Left lung (tissue), 14 donors: ENCODE measurements at regions of chr6 and their contacts with region 1.

Region 1: DNA sequence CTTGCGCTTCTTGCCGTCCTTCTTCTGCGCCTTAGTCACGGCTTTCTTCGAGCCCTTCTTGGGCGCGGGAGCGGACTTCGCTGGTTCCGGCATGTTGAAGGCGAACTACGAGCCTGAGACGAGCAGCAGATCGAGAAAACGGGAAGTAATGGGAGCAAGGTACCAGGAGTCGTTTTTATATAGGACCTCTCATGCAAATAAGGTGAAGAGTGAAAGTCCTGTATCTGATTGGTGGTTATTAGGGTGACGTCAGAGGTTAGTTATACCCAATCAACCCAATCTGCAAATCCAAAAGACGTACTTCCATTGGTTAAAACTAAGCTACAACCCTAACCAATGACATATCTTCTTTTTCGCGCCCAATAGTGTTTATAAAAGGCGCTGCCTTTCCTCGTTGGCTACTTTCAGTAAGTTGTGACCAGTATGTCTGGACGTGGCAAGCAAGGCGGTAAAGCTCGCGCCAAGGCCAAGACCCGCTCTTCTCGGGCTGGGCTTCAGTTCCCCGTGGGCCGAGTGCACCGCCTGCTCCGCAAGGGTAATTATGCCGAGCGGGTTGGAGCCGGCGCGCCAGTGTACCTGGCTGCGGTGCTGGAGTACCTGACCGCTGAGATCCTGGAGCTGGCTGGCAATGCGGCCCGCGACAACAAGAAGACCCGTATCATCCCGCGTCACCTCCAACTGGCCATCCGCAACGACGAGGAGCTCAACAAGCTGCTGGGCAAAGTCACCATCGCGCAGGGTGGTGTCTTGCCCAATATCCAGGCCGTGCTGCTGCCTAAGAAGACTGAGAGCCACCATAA is 100.6 kb upstream of the PRSS16 start:
- DNase-seq: peak; percentile 86 to 98 (median 92)
- ATAC-seq: peak; percentile 93
- H3K4me3 ChIP-seq: peak overlapping the region; percentile 56 to 58
- H3K27ac ChIP-seq: peak overlapping the region; percentile 93 to 98
- H3K4me1 ChIP-seq: peaks cover 9 to 27% of the 10 kb centered on the region in 2 donors
- H3K27me3 ChIP-seq: no peaks in the 10 kb centered on the region
- CTCF ChIP-seq: no peak

Region 2: GRCh38 chr6:27893059-27893835 is 746.3 kb after region 1 on chr6:
- intact Hi-C with region 1: loop called in 1 of 2 experiments (anchors 10 kb)
- DNase-seq: peak; percentile 91 to 96 (median 93)
- ATAC-seq: peak; percentile 72
- H3K4me3 ChIP-seq: peak overlapping the region; percentile 59 to 64
- H3K27ac ChIP-seq: peak overlapping the region; percentile 78 to 93
- H3K4me1 ChIP-seq: peaks cover 4 to 50% of the 10 kb centered on the region in 2 donors
- H3K27me3 ChIP-seq: peaks cover 0 to 41% of the 10 kb centered on the region in 2 donors
- CTCF ChIP-seq: no peak